ENCODE measurements at regions of chr12 and their contacts with region 1.

Region 1: DNA sequence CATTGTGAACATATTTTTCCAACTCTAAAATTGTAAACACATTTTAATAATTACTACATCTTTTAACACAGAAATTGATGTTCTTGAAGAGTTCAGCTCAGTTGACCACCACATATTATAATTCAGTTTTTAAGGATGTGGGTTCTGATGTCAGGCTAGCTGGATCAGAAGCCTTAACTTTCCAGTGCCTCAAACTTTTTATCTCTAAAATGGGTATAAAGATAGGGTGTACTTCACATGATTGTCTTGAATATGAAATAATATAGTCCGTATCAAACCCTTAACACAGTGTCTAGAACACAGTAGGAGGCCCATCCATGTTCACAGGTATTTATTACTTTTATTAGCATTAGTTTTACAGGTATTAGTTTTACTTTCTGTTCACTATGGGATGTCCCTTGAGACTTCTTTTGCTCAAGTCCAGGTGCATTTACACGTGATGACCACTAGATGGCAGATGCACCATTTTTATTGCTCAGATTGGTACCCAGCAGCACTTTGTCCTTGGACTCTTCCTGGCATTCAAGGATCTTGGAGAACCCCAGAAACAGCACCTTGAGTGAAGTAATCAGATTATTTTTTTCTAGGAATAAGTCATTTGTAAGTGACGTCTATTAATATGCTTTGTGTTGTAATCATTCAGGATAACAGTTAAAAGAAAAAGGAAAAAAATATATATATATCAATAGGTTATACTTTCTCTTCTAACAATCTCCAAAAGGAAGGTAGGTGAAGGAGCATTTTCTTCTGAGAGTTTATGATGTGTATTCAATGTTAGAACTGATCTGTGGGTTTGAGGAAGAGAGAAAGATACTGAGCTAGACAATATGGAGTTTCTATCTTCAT is 580.2 kb downstream of the ETNK1 start:
- DNase-seq: peak; percentile 8 to 42 (median 37)
- H3K4me3 ChIP-seq: no peak overlapping the region
- H3K4me3 Mint-ChIP-seq: no peak overlapping the region
- H3K27ac ChIP-seq: no peak overlapping the region
- H3K27ac Mint-ChIP-seq: no peak overlapping the region
- H3K4me1 ChIP-seq: no peaks in the 10 kb centered on the region
- H3K4me1 Mint-ChIP-seq: no peaks in the 10 kb centered on the region
- H3K27me3 ChIP-seq: no peaks in the 10 kb centered on the region
- H3K27me3 Mint-ChIP-seq: no peaks in the 10 kb centered on the region
- CTCF ChIP-seq: peak; percentile 93

Region 2: GRCh38 chr12:24778486-24779304 is 1573.5 kb after region 1 on chr12:
- intact Hi-C with region 1: loop called in 1 of 2 experiments (anchors 10 kb)
- DNase-seq: peak; percentile 18 to 33 (median 28)
- H3K4me3 ChIP-seq: no peak overlapping the region
- H3K4me3 Mint-ChIP-seq: no peak overlapping the region
- H3K27ac ChIP-seq: no peak overlapping the region
- H3K27ac Mint-ChIP-seq: no peak overlapping the region
- H3K4me1 ChIP-seq: peaks cover 3 to 8% of the 10 kb centered on the region in 2 donors
- H3K4me1 Mint-ChIP-seq: peaks cover 8% of the 10 kb centered on the region
- H3K27me3 ChIP-seq: no peaks in the 10 kb centered on the region
- H3K27me3 Mint-ChIP-seq: peaks cover 0 to 1% (median 0%) of the 10 kb centered on the region in 3 donors
- CTCF ChIP-seq: peak; percentile 64

Measured in CD14-positive monocyte (primary cell).